Mammary epithelial cell (primary cell): ENCODE measurements at regions of chr11 and their contacts with region 1.

Region 1: GRCh38 chr11:119721129-119722120 is 7.6 kb downstream of the NECTIN1 start:
- DNase-seq: peak; percentile 85
- H3K4me3 ChIP-seq: peak overlapping the region in 1 of 3 experiments; percentile 4
- H3K27ac ChIP-seq: peak overlapping the region; percentile 12
- H3K4me1 ChIP-seq: peaks cover 68% of the 10 kb centered on the region
- H3K27me3 ChIP-seq: no peaks in the 10 kb centered on the region
- CTCF ChIP-seq: peak; percentile 57 to 72

Region 2: DNA sequence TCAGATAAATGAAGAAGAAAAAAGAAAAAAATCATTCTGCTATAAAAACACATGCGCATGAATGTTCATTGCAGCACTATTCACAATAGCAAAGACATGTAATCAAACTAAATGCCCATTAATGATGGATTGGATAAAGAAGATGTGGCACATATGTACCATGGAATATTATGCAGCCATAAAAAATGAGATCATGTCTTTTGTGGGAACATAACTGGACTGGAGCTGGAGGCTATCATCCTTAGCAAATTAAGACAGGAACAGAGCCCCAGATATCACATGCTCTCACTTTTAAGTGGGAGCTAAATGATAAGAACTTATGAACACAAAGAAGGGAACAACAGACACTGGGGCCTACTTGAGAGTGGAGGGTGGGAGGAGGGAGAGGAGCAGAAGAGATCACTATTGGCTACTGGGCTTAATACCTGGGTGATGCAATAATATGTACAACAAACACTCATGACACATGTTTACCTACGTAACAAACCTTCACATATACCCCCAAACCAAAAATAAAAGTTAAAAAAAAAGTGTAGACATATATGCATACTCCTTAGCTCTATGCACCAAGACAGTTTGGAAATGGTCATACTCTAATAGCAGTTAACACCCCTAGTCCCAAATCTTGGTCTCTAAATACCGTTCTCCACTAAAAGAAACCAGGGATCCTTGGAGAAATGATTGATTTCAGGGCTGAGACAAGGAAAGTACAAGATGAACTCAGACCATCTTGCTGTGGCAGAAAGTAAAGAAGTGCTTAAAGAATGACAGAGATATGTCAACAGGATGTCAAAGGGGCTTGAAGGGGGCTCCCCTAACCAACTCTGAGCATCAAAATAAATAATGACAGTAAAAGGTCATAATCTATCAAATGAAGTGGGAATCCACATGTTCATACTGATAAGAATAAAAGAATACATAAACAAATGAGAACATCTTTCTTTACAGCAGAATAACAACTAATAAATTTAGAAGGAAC is 913.3 kb before region 1 on chr11:
- CTCF ChIA-PET with region 1: no interaction called
- dilution Hi-C with region 1: no loop called
- in situ Hi-C with region 1: no loop called
- intact Hi-C with region 1: no loop called
- DNase-seq: no peak
- H3K4me3 ChIP-seq: no peak overlapping the region
- H3K27ac ChIP-seq: no peak overlapping the region
- H3K4me1 ChIP-seq: no peaks in the 10 kb centered on the region
- H3K27me3 ChIP-seq: no peaks in the 10 kb centered on the region
- CTCF ChIP-seq: no peak

Region 3: GRCh38 chr11:119121008-119121810 is 600.2 kb before region 1 on chr11 and contains the start of gene HINFP:
- CTCF ChIA-PET with region 1: no interaction called
- dilution Hi-C with region 1: loop called (anchors 25 kb)
- in situ Hi-C with region 1: no loop called
- intact Hi-C with region 1: no loop called
- DNase-seq: peak; percentile 99
- H3K4me3 ChIP-seq: peak within 1 kb of the TSS; percentile 77 to 99 (median 94)
- H3K27ac ChIP-seq: peak within 1 kb of the TSS; percentile 79
- H3K4me1 ChIP-seq: peaks cover 12% of the 10 kb centered on the region
- H3K27me3 ChIP-seq: no peaks in the 10 kb centered on the region
- CTCF ChIP-seq: no peak
- total RNA-seq, gene HINFP: 23.7 to 26.8 TPM

Region 4: DNA sequence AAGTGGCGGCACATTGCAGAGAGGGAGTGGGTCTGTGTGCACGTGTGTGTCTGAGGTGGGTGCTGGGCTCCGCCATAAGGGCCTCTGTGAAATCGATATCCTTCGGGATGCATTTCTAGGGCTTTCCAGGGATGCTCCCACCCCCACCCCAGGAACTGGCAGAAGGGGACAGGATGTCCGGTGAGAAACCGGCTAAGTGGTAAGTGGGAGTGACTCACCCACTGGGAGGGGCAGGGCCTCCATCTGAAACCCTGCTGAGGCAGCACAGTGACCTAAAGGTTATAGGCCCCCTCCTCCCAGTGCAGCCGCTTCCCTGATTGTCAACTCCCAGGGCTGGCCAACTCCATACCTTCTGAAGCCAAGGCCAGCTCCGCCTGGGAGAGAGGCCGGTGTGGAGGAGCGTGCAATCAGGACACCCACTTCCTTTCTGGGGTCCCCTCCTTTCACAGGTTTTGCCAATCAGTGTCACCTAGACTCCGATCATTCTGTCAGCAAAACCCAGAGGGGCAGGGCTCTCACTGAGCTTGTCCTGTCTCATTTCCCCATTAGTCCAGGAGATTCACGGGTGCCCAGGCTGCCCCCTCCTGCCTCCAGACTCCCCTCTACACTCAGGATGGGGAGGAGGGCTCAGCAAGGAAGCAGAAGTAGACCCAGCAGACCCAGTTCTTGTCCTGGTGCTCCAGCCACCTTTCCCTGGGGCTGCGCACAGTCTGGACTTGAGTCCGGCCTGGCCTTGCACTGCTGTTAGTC is 36.9 kb before region 1 on chr11:
- CTCF ChIA-PET with region 1: no interaction called
- dilution Hi-C with region 1: loop called (anchors 5 kb)
- in situ Hi-C with region 1: loop called (anchors 5 to 10 kb)
- intact Hi-C with region 1: no loop called
- DNase-seq: peak; percentile 91
- H3K4me3 ChIP-seq: peak overlapping the region in 1 of 3 experiments; percentile 1
- H3K27ac ChIP-seq: peak overlapping the region; percentile 90
- H3K4me1 ChIP-seq: peaks cover 85% of the 10 kb centered on the region
- H3K27me3 ChIP-seq: no peaks in the 10 kb centered on the region
- CTCF ChIP-seq: no peak

Region 5: DNA sequence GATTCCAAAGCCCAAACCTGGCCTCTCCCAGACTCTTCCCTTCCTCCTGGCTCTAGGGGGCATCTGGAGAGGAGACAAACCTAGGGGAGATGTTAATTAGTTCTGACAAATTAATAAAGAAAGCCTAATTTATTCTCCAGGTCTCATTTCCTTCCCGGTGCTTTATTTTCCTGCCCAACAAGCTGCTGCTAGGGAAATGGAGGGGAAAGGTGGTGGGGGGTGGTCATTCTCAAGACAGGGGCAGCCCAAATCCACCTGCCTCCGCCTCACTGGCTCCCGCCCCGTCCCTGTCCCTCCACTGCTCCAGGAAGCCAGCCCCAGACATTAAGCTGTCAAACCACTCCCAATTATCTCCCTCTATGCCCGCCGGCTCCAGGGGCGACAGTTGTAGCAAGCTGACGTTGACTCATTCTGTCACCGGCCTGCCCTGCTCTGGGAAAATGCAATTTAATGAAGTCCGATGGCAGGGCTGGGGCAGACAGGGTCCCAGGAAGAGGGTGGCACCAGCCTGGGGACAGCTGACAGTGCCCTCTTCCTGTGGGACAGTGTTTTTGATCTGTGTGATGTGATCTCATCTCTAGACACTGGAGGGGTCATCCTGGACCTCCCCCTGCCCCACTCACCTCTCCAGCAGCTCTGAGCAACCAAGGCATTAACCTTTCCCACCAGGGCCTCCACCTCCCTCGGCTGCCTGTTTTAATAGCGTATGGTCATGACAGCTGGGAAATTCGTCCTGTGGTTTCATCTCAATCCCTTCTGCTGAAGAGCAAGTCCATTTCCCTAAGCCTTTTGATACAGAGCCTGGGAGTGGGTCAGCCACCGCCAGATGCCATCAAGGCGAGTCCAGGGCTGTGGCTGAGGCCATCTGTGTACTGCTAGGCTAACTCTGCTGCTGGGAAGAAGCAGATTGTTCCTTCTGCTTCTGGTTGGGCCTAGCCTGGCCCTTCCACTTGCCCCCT is 19.6 kb before region 1 on chr11:
- CTCF ChIA-PET with region 1: no interaction called
- dilution Hi-C with region 1: no loop called
- in situ Hi-C with region 1: no loop called
- intact Hi-C with region 1: no loop called
- DNase-seq: peak; percentile 46
- H3K4me3 ChIP-seq: no peak overlapping the region
- H3K27ac ChIP-seq: peak overlapping the region; percentile 45
- H3K4me1 ChIP-seq: peaks cover 65% of the 10 kb centered on the region
- H3K27me3 ChIP-seq: no peaks in the 10 kb centered on the region
- CTCF ChIP-seq: no peak